MCF 10A (cell line): ENCODE measurements at regions of chr10 and their contacts with region 1.

Region 1: GRCh38 chr10:51422311-51423120 is 276.9 kb downstream of the CSTF2T start:
- DNase-seq: peak; percentile 60
- H3K4me3 Mint-ChIP-seq: no peak overlapping the region
- H3K27ac Mint-ChIP-seq: no peak overlapping the region
- H3K4me1 Mint-ChIP-seq: no peaks in the 10 kb centered on the region
- H3K27me3 Mint-ChIP-seq: peaks cover 61% of the 10 kb centered on the region
- CTCF ChIP-seq: peak; percentile 70

Region 2: GRCh38 chr10:51010977-51011376 is 411.5 kb before region 1 on chr10:
- CTCF ChIA-PET with region 1: interaction called, 8 read pairs
- POLR2A ChIA-PET with region 1: no interaction called
- intact Hi-C with region 1: loop called (anchors 2 kb)
- DNase-seq: peak; percentile 55
- H3K4me3 Mint-ChIP-seq: no peak overlapping the region
- H3K27ac Mint-ChIP-seq: no peak overlapping the region
- H3K4me1 Mint-ChIP-seq: peaks cover 5% of the 10 kb centered on the region
- H3K27me3 Mint-ChIP-seq: peaks cover 29% of the 10 kb centered on the region
- CTCF ChIP-seq: peak; percentile 61

Region 3: DNA sequence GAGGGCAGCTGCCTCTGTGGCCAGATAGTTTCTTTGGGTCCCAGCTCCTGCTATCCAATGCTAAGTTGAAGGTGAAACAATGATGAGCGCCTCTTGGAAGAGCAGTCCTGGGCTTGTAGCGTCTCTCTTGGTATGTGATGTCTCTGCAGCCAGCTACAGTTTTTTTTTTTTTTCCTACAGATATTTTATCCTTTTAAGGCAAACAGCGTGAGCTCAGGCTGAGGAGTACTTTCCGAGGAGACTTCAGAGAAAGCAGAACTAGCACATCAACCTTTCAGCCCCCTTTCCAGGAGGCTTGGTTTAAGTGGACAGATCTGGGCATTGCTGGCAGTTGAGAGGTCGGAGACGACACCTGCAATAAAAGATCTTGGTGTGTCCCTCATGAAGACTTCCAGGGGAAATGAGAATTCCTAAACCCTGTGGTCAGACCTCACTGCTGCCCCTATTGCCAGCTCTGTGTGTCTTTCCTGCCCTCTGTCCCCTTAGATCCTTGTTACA is 339.1 kb before region 1 on chr10:
- CTCF ChIA-PET with region 1: interaction called, 10 read pairs
- POLR2A ChIA-PET with region 1: no interaction called
- intact Hi-C with region 1: no loop called
- DNase-seq: no peak
- H3K4me3 Mint-ChIP-seq: no peak overlapping the region
- H3K27ac Mint-ChIP-seq: no peak overlapping the region
- H3K4me1 Mint-ChIP-seq: no peaks in the 10 kb centered on the region
- H3K27me3 Mint-ChIP-seq: peaks cover 51% of the 10 kb centered on the region
- CTCF ChIP-seq: no peak

Region 4: GRCh38 chr10:51186361-51186760 is 236.2 kb before region 1 on chr10:
- CTCF ChIA-PET with region 1: no interaction called
- POLR2A ChIA-PET with region 1: no interaction called
- intact Hi-C with region 1: no loop called
- DNase-seq: no peak
- H3K4me3 Mint-ChIP-seq: no peak overlapping the region
- H3K27ac Mint-ChIP-seq: no peak overlapping the region
- H3K4me1 Mint-ChIP-seq: no peaks in the 10 kb centered on the region
- H3K27me3 Mint-ChIP-seq: no peaks in the 10 kb centered on the region
- CTCF ChIP-seq: no peak

Region 5: DNA sequence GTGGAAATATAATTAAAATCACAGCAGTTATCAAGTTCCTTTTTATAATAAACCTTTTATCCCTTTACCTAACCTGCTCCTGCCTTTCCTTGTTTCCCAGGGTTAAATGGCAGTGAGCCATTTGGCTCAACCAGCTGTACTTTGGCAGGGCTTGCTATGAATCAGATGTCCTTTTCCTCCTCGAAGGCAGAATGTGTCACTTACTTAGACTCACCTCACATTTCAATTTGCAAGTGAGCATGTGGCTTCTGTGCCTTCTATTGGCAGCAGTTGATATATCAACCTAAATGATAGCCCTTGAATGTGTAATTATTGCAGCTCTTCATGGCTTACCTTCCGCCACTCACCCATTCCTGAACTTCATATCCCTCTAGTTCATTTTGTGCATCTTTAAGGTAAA is 24.8 kb before region 1 on chr10:
- CTCF ChIA-PET with region 1: interaction called, 10 read pairs
- POLR2A ChIA-PET with region 1: no interaction called
- intact Hi-C with region 1: no loop called
- DNase-seq: peak; percentile 92
- H3K4me3 Mint-ChIP-seq: no peak overlapping the region
- H3K27ac Mint-ChIP-seq: no peak overlapping the region
- H3K4me1 Mint-ChIP-seq: peaks cover 8% of the 10 kb centered on the region
- H3K27me3 Mint-ChIP-seq: no peaks in the 10 kb centered on the region
- CTCF ChIP-seq: no peak

Region 6: DNA sequence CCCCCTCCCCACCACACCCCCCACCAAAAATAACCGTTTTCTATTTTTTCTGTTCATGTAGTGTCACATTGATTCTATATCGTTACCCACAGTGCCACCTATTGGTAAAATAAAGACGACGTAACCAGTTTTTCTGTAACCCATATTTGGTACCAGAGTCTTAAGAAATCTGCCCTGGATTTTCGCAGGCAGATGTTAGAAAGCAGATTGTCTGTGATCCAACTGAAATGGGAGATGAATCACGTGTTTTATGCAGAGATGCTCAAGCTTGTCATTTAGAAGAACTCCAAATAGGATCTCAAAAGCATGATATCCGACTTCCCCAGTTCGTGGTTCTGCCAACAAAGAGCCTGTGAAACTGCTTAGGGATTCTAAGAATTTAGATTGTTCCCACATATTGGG is 538.0 kb after region 1 on chr10:
- CTCF ChIA-PET with region 1: interaction called, 6 read pairs
- POLR2A ChIA-PET with region 1: no interaction called
- intact Hi-C with region 1: loop called (anchors 5 kb)
- DNase-seq: peak; percentile 58
- H3K4me3 Mint-ChIP-seq: no peak overlapping the region
- H3K27ac Mint-ChIP-seq: no peak overlapping the region
- H3K4me1 Mint-ChIP-seq: no peaks in the 10 kb centered on the region
- H3K27me3 Mint-ChIP-seq: peaks cover 84% of the 10 kb centered on the region
- CTCF ChIP-seq: peak; percentile 44

Region 7: DNA sequence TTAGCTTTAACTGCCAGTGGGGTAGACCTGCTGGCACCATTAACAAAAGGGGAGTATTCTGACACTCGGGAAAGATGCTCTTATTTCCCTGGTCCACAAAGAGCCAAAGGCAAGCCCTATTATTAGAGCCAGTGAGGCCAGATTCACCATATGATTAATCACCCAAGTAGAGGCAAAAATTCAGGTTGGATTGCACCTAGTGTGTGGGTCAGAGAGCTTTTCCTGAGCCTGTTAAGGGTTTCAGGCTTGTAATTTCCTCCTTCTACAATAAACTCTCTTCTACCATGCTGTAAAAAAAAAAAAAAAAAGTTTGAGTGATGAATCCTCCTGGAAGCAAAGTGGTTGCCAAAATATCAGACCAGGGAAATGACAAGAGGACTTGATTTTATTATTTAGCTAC is 1186.6 kb after region 1 on chr10:
- CTCF ChIA-PET with region 1: no interaction called
- POLR2A ChIA-PET with region 1: no interaction called
- intact Hi-C with region 1: no loop called
- DNase-seq: no peak
- H3K4me3 Mint-ChIP-seq: no peak overlapping the region
- H3K27ac Mint-ChIP-seq: no peak overlapping the region
- H3K4me1 Mint-ChIP-seq: no peaks in the 10 kb centered on the region
- H3K27me3 Mint-ChIP-seq: no peaks in the 10 kb centered on the region
- CTCF ChIP-seq: no peak